ENCODE measurements at regions of chr2 and their contacts with region 1.

Region 1: DNA sequence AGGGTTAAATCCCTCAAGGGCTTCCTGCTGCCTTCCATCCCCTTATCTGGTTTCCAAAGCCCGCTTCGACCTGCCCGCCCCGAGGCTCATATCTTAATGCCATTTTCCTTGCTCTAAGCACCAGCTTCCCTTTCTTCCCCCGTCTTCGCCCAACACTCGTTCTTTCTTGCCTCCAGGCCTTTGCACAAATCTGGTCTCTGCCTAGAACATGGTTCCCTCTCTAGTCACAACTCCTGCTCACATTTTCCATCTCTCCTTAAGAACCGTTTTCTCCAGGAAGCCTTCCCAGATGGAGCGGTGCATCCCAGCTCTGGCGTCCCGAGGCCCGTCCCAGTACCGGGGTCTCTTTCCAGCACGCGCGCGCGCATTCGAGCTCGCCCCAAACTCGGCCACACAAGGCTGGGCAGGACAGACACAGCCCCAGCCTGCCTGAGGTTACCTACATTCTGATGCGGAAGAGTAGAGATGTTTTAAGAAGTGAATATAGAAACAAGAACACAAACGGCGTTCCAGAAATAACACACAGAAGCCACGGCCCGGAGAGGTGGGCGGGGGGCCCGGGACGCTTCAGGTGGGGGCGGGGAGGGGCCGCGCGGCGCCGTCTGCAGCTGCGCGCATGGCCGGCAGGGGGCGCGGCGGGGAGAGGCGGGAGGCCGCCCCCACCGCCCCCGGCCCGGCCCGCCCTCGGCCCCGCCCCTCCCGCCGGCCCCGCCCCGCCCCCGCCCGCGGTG is at the start of gene DGKD:
- DNase-seq: peak; percentile 77
- ATAC-seq: peak; percentile 77
- H3K4me3 Mint-ChIP-seq: peak within 1 kb of the TSS; percentile 83
- H3K27ac Mint-ChIP-seq: peak within 1 kb of the TSS; percentile 92
- H3K4me1 Mint-ChIP-seq: peaks cover 64% of the 10 kb centered on the region
- H3K27me3 Mint-ChIP-seq: no peaks in the 10 kb centered on the region
- CTCF ChIP-seq: no peak
- total RNA-seq, gene DGKD: 89.6 to 99.5 TPM

Region 2: DNA sequence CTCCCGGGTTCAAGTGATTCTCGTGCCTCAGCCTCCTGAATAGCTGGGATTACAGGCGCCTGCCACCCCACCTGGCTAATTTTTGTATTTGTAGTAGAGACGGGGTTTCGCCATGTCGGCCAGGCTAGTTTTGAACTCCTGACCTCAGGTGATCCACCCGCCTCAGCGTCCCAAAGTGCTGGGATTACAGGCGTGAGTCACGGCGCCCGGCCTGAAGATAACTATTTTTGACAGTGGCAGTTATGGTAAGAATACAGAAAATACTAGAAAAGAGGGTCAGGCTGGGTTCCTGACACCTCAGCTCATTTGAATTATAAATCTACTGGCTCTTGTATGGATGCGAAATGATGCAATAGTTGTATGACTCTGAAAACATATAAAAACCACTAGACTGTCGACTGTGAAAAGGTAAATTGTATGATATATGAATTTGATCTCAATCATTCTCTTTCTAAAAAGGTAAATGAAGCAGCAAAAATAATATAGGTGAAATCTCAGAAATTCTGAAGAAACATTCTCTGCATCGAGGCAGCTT is 10.7 kb before region 1 on chr2:
- CTCF ChIA-PET with region 1: interaction called, 18 read pairs
- POLR2A ChIA-PET with region 1: no interaction called
- intact Hi-C with region 1: no loop called
- DNase-seq: no peak
- ATAC-seq: no peak
- H3K4me3 Mint-ChIP-seq: no peak overlapping the region
- H3K27ac Mint-ChIP-seq: no peak overlapping the region
- H3K4me1 Mint-ChIP-seq: peaks cover 7% of the 10 kb centered on the region
- H3K27me3 Mint-ChIP-seq: no peaks in the 10 kb centered on the region
- CTCF ChIP-seq: no peak

Measured in activated CD8-positive, alpha-beta T cell treated with anti-CD3 and anti-CD28 coated beads for 36 hours (primary cell).